ENCODE measurements at regions of chr1 and their contacts with region 1.

Region 1: DNA sequence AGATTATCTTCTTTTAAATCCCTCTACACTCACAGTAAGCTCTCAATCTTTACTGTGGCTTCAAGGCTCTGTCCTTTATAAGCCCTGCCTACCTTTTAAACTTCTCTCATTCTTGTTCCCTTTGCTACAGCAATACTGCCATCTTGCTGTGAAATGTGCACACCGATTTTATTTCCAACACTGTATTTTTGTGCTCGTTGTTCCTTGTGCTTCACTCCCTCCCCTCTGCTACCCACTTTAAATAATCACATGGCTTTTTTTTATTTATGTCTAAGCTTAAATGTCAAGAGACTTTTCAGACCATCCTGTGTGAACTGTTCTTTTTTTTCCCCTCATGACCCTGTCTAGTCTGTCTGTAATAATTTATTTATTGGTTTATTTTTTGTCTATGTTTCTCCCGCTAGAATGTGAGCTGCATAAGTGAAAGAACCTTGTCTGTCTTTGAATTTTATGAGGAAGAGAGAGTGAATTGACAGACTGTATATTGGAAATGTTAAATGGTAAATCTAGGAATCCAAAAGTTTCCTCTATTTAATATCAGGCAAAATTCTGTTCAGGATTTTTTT is 45.7 kb downstream of the ABCD3 start:
- DNase-seq: peak in 7 of 9 donors; percentile 20 to 56 (median 45)
- ATAC-seq: peak; percentile 64
- H3K4me3 ChIP-seq: no peak overlapping the region
- H3K4me3 Mint-ChIP-seq: no peak overlapping the region
- H3K27ac ChIP-seq: no peak overlapping the region
- H3K27ac Mint-ChIP-seq: peak overlapping the region in 1 of 9 donors; percentile 47
- H3K4me1 ChIP-seq: no peaks in the 10 kb centered on the region
- H3K4me1 Mint-ChIP-seq: peaks cover 0 to 14% (median 9%) of the 10 kb centered on the region in 7 donors
- H3K27me3 ChIP-seq: no peaks in the 10 kb centered on the region
- H3K27me3 Mint-ChIP-seq: no peaks in the 10 kb centered on the region

Region 2: DNA sequence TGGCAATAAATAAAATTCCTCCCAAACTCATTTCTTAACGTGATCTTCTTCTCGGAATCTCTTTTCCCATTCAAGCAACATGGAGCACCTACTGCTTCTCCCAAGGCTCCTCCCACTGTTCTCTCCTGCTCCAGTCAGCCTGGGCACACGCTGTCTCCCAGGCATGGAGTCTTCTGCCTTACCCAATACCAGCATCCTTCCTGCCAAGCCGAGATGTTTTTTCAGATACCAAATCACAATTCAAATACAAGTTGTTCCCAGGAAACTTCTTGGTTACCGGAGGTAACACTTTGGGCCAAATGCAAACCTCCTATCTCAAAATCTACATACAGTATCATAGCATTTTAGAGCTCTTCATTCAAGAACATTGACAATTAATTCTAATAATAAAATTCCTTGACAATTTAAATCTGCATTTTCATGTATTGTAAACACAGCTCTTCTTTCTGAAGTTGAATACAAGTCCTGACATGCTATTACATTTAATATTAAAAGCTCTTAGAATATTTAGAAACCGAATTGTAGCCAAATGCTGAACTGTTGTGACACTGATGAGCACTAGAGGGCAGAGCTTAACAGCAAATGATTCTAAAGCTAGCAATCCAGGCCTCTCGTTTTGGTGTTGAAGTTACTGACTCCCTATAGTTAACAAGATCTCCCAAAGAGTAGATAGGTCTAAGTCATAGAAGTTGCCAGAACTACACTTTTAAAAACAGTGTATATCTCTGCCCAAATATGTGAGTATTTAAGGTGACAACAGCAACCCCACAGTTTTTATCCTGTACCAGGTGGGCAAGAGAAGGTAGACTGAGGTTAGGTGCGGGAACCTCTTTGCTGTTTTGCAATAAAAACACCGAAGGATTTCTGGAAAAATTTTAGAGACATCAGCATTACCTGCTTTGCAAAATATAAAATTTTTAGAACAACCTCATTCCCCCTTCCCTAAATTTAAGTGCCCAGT is 834.5 kb before region 1 on chr1:
- CTCF ChIA-PET with region 1: no interaction called
- POLR2A ChIA-PET with region 1: no interaction called
- intact Hi-C with region 1: loop called in 1 of 2 experiments (anchors 1 kb)
- DNase-seq: peak in 8 of 9 donors; percentile 22 to 69 (median 56)
- ATAC-seq: peak; percentile 89
- H3K4me3 ChIP-seq: no peak overlapping the region
- H3K4me3 Mint-ChIP-seq: no peak overlapping the region
- H3K27ac ChIP-seq: no peak overlapping the region
- H3K27ac Mint-ChIP-seq: no peak overlapping the region
- H3K4me1 ChIP-seq: no peaks in the 10 kb centered on the region
- H3K4me1 Mint-ChIP-seq: no peaks in the 10 kb centered on the region
- H3K27me3 ChIP-seq: no peaks in the 10 kb centered on the region
- H3K27me3 Mint-ChIP-seq: peaks cover 0 to 10% (median 0%) of the 10 kb centered on the region in 5 donors

Region 3: GRCh38 chr1:94039514-94039870 is 424.4 kb before region 1 on chr1:
- CTCF ChIA-PET with region 1: interaction called, 9 read pairs
- POLR2A ChIA-PET with region 1: no interaction called
- intact Hi-C with region 1: loop called in 1 of 2 experiments (anchors 1 kb)
- DNase-seq: peak in 7 of 9 donors; percentile 10 to 57 (median 29)
- ATAC-seq: peak; percentile 37
- H3K4me3 ChIP-seq: no peak overlapping the region
- H3K4me3 Mint-ChIP-seq: no peak overlapping the region
- H3K27ac ChIP-seq: no peak overlapping the region
- H3K27ac Mint-ChIP-seq: peak overlapping the region in 1 of 9 donors; percentile 1
- H3K4me1 ChIP-seq: no peaks in the 10 kb centered on the region
- H3K4me1 Mint-ChIP-seq: peaks cover 0 to 14% (median 0%) of the 10 kb centered on the region in 7 donors
- H3K27me3 ChIP-seq: no peaks in the 10 kb centered on the region
- H3K27me3 Mint-ChIP-seq: peaks cover 20 to 49% (median 30%) of the 10 kb centered on the region in 5 donors

Region 4: DNA sequence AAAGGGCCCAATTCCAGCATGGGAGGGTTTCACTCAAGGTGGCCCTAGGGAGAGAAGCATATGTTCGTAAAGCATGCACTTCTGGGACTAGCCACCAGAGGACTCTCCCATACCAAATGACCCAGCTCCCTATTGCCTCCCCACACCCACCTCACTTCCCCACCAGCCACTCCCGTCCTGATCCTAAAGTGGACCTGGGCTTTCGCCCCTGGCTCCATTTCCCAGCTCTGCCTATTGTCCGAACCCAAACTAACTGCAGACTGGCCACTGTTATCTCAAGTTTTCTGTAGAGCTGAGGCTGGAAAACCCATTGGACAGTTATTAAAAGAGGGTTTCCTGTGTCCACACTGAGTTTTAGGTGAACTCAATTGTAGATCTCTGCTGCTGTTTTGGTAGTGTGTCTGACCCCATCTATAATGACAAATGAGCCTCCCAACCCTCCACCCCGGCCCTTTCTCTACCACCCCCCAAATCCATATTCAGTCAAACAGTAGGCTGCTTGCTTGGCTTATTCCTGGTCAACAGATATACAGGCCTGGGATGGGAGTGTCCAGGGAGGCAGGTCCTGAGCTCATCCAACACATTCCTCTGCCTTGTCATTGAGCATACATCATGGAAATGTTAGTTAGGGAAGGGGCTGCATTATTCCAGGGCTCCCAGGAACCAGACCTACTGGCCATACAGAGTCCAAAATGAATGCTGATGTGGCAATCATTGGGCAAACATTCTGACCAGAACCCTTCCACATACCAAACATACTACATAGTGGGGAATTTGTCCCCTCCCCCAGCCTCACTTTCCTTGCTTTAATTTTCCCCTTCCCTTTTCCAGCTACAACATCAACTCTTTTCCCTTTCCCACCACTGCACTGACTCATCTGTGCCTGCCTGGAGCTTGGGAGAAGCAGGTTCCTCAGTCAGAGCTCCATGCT is 402.1 kb before region 1 on chr1:
- CTCF ChIA-PET with region 1: no interaction called
- POLR2A ChIA-PET with region 1: no interaction called
- intact Hi-C with region 1: loop called in 1 of 2 experiments (anchors 1 kb)
- DNase-seq: peak in 5 of 9 donors; percentile 11 to 31 (median 17)
- ATAC-seq: peak; percentile 78
- H3K4me3 ChIP-seq: no peak overlapping the region
- H3K4me3 Mint-ChIP-seq: no peak overlapping the region
- H3K27ac ChIP-seq: no peak overlapping the region
- H3K27ac Mint-ChIP-seq: no peak overlapping the region
- H3K4me1 ChIP-seq: no peaks in the 10 kb centered on the region
- H3K4me1 Mint-ChIP-seq: peaks cover 0 to 2% (median 0%) of the 10 kb centered on the region in 7 donors
- H3K27me3 ChIP-seq: no peaks in the 10 kb centered on the region
- H3K27me3 Mint-ChIP-seq: peaks cover 7 to 25% (median 14%) of the 10 kb centered on the region in 5 donors

Region 5: DNA sequence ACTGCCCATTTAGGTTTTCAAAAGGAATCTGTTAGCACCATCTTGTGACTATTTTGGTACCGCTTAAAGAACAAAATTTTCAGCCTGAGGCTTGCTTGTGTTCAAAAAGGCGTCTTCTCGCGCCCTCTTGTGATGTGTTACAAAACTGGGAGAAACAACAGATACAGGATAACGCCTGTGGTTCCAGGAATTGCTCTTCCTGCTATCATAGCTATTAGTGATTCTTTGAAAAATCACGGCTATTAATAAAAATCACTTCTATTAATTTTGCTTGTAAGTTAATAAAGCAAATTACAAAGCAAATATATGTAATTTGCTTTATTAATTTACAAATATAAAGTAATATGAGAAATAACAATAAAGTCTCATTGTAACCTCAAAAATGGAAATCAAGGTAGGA is 127.9 kb before region 1 on chr1:
- CTCF ChIA-PET with region 1: interaction called, 4 read pairs
- POLR2A ChIA-PET with region 1: no interaction called
- intact Hi-C with region 1: loop called in 1 of 2 experiments (anchors 5 kb)
- DNase-seq: peak in 4 of 9 donors; percentile 3 to 34 (median 14)
- ATAC-seq: peak; percentile 49
- H3K4me3 ChIP-seq: no peak overlapping the region
- H3K4me3 Mint-ChIP-seq: no peak overlapping the region
- H3K27ac ChIP-seq: no peak overlapping the region
- H3K27ac Mint-ChIP-seq: no peak overlapping the region
- H3K4me1 ChIP-seq: no peaks in the 10 kb centered on the region
- H3K4me1 Mint-ChIP-seq: peaks cover 0 to 3% (median 0%) of the 10 kb centered on the region in 7 donors
- H3K27me3 ChIP-seq: no peaks in the 10 kb centered on the region
- H3K27me3 Mint-ChIP-seq: peaks cover 4 to 21% (median 10%) of the 10 kb centered on the region in 5 donors

Region 6: GRCh38 chr1:94425821-94426484 is 37.9 kb before region 1 on chr1:
- CTCF ChIA-PET with region 1: no interaction called
- POLR2A ChIA-PET with region 1: no interaction called
- intact Hi-C with region 1: no loop called
- DNase-seq: no peak
- ATAC-seq: no peak
- H3K4me3 ChIP-seq: no peak overlapping the region
- H3K4me3 Mint-ChIP-seq: peak overlapping the region in 7 of 10 donors; percentile 7 to 47 (median 24)
- H3K27ac ChIP-seq: no peak overlapping the region
- H3K27ac Mint-ChIP-seq: peak overlapping the region in 2 of 9 donors; percentile 10 to 14
- H3K4me1 ChIP-seq: no peaks in the 10 kb centered on the region
- H3K4me1 Mint-ChIP-seq: peaks cover 26 to 86% (median 81%) of the 10 kb centered on the region in 7 donors
- H3K27me3 ChIP-seq: no peaks in the 10 kb centered on the region
- H3K27me3 Mint-ChIP-seq: no peaks in the 10 kb centered on the region

Measured in naive thymus-derived CD4-positive, alpha-beta T cell (primary cell).